ENCODE measurements at regions of chr10 and their contacts with region 1.

Region 1: GRCh38 chr10:88932539-88933256 is 19.9 kb downstream of the ACTA2 start:
- DNase-seq: peak; percentile 71
- ATAC-seq: peak; percentile 78
- H3K4me3 ChIP-seq: no peak overlapping the region
- H3K4me3 Mint-ChIP-seq: no peak overlapping the region
- H3K27ac ChIP-seq: no peak overlapping the region
- H3K27ac Mint-ChIP-seq: peak overlapping the region; percentile 39
- H3K4me1 ChIP-seq: peaks cover 13 to 20% of the 10 kb centered on the region in 2 donors
- H3K4me1 Mint-ChIP-seq: peaks cover 33% of the 10 kb centered on the region
- H3K27me3 ChIP-seq: no peaks in the 10 kb centered on the region
- H3K27me3 Mint-ChIP-seq: no peaks in the 10 kb centered on the region
- CTCF ChIP-seq: peak; percentile 81

Region 2: DNA sequence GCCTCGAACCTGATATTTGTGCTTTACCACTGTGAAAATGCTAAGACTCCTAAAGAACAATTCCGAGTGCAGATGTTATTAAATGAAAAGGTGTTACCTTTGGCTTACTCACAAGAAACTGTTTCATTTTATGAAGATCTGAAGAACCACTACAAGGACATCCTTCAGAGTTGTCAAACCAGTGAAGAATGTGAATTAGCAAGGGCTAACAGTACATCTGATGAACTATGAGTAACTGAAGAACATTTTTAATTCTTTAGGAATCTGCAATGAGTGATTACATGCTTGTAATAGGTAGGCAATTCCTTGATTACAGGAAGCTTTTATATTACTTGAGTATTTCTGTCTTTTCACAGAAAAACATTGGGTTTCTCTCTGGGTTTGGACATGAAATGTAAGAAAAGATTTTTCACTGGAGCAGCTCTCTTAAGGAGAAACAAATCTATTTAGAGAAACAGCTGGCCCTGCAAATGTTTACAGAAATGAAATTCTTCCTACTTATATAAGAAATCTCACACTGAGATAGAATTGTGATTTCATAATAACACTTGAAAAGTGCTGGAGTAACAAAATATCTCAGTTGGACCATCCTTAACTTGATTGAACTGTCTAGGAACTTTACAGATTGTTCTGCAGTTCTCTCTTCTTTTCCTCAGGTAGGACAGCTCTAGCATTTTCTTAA is 1380.3 kb before region 1 on chr10:
- CTCF ChIA-PET with region 1: no interaction called
- POLR2A ChIA-PET with region 1: no interaction called
- intact Hi-C with region 1: no loop called
- DNase-seq: no peak
- ATAC-seq: no peak
- H3K4me3 ChIP-seq: no peak overlapping the region
- H3K4me3 Mint-ChIP-seq: no peak overlapping the region
- H3K27ac ChIP-seq: no peak overlapping the region
- H3K27ac Mint-ChIP-seq: no peak overlapping the region
- H3K4me1 ChIP-seq: no peaks in the 10 kb centered on the region
- H3K4me1 Mint-ChIP-seq: no peaks in the 10 kb centered on the region
- H3K27me3 ChIP-seq: no peaks in the 10 kb centered on the region
- H3K27me3 Mint-ChIP-seq: no peaks in the 10 kb centered on the region
- CTCF ChIP-seq: no peak

Region 3: DNA sequence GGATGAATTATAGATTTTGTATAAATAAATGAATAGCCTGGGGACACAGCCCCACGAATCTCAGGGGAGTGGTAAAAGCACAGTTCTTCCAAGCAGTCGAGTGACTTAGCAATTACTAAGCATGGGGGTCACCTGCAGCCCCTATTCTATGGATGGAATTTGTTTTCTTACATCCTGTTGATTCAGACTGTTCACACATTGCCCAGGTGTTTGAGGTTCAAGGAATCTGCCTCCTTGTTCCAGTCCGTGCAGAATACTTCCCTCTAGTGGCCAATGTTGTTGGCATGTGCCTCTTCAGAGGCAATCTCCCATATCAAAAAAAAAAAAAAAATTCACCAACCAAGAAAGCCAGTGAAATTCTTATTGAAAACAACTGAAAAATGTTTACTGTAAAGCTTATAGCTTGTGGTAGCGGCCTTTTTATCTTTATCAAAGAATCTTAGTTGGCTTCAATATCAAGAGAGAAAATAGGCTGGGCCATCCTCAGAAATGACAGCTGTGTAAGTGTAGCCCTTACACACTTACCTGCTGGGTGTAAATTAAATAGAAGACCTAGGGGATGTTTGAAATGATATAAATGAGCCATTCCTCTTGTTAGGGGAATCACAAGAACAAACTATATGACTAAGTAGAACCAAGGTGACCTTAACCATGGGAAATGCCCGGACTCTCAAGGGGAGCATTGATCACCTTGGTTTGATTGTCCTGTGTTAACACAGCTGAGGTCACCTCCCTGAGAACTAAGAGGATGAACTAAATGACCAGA is 122.3 kb before region 1 on chr10:
- CTCF ChIA-PET with region 1: interaction called, 15 read pairs
- POLR2A ChIA-PET with region 1: no interaction called
- intact Hi-C with region 1: no loop called
- DNase-seq: peak; percentile 53
- ATAC-seq: peak; percentile 54
- H3K4me3 ChIP-seq: no peak overlapping the region
- H3K4me3 Mint-ChIP-seq: no peak overlapping the region
- H3K27ac ChIP-seq: no peak overlapping the region
- H3K27ac Mint-ChIP-seq: no peak overlapping the region
- H3K4me1 ChIP-seq: no peaks in the 10 kb centered on the region
- H3K4me1 Mint-ChIP-seq: no peaks in the 10 kb centered on the region
- H3K27me3 ChIP-seq: no peaks in the 10 kb centered on the region
- H3K27me3 Mint-ChIP-seq: peaks cover 13% of the 10 kb centered on the region
- CTCF ChIP-seq: peak; percentile 73

Region 4: GRCh38 chr10:88901206-88901983 is 31.3 kb before region 1 on chr10:
- CTCF ChIA-PET with region 1: interaction called, 63 read pairs
- POLR2A ChIA-PET with region 1: interaction called, 6 read pairs
- intact Hi-C with region 1: loop called (anchors 2 kb)
- DNase-seq: peak; percentile 81
- ATAC-seq: peak; percentile 85
- H3K4me3 ChIP-seq: peak overlapping the region in 1 of 5 experiments; percentile 17
- H3K4me3 Mint-ChIP-seq: peak overlapping the region; percentile 74
- H3K27ac ChIP-seq: peak overlapping the region; percentile 78 to 81
- H3K27ac Mint-ChIP-seq: peak overlapping the region; percentile 98
- H3K4me1 ChIP-seq: peaks cover 38 to 64% of the 10 kb centered on the region in 2 donors
- H3K4me1 Mint-ChIP-seq: peaks cover 58% of the 10 kb centered on the region
- H3K27me3 ChIP-seq: no peaks in the 10 kb centered on the region
- H3K27me3 Mint-ChIP-seq: no peaks in the 10 kb centered on the region
- CTCF ChIP-seq: no peak

Region 5: GRCh38 chr10:88944813-88945212 is 12.1 kb after region 1 on chr10:
- CTCF ChIA-PET with region 1: interaction called, 68 read pairs
- POLR2A ChIA-PET with region 1: no interaction called
- intact Hi-C with region 1: no loop called
- DNase-seq: peak; percentile 32
- ATAC-seq: peak; percentile 24
- H3K4me3 ChIP-seq: no peak overlapping the region
- H3K4me3 Mint-ChIP-seq: no peak overlapping the region
- H3K27ac ChIP-seq: no peak overlapping the region
- H3K27ac Mint-ChIP-seq: no peak overlapping the region
- H3K4me1 ChIP-seq: peaks cover 10 to 11% of the 10 kb centered on the region in 2 donors
- H3K4me1 Mint-ChIP-seq: peaks cover 18% of the 10 kb centered on the region
- H3K27me3 ChIP-seq: no peaks in the 10 kb centered on the region
- H3K27me3 Mint-ChIP-seq: no peaks in the 10 kb centered on the region
- CTCF ChIP-seq: no peak

Region 6: GRCh38 chr10:89207181-89207800 is 274.6 kb after region 1 on chr10 and contains the start of gene CH25H:
- CTCF ChIA-PET with region 1: interaction called, 36 read pairs
- POLR2A ChIA-PET with region 1: no interaction called
- intact Hi-C with region 1: no loop called
- DNase-seq: peak; percentile 66
- ATAC-seq: peak; percentile 42
- H3K4me3 ChIP-seq: peak within 1 kb of the TSS; percentile 25 to 85 (median 62)
- H3K4me3 Mint-ChIP-seq: peak within 1 kb of the TSS; percentile 90
- H3K27ac ChIP-seq: no peak within 1 kb of the TSS
- H3K27ac Mint-ChIP-seq: peak within 1 kb of the TSS; percentile 7
- H3K4me1 ChIP-seq: peaks cover 32 to 34% of the 10 kb centered on the region in 2 donors
- H3K4me1 Mint-ChIP-seq: peaks cover 30% of the 10 kb centered on the region
- H3K27me3 ChIP-seq: peaks cover 0 to 59% (median 43%) of the 10 kb centered on the region in 4 experiments
- H3K27me3 Mint-ChIP-seq: peaks cover 48% of the 10 kb centered on the region
- CTCF ChIP-seq: no peak
- total RNA-seq, gene CH25H: not detected in 2 replicates

Measured in B cell (primary cell).